ENCODE measurements at regions of chr5 and their contacts with region 1.

Region 1: GRCh38 chr5:121489972-121490371 is 361.7 kb upstream of the FTMT start:
- DNase-seq: no peak
- H3K4me3 ChIP-seq: no peak overlapping the region
- H3K27ac ChIP-seq: no peak overlapping the region
- H3K4me1 ChIP-seq: no peaks in the 10 kb centered on the region
- H3K27me3 ChIP-seq: no peaks in the 10 kb centered on the region
- CTCF ChIP-seq: no peak

Region 2: DNA sequence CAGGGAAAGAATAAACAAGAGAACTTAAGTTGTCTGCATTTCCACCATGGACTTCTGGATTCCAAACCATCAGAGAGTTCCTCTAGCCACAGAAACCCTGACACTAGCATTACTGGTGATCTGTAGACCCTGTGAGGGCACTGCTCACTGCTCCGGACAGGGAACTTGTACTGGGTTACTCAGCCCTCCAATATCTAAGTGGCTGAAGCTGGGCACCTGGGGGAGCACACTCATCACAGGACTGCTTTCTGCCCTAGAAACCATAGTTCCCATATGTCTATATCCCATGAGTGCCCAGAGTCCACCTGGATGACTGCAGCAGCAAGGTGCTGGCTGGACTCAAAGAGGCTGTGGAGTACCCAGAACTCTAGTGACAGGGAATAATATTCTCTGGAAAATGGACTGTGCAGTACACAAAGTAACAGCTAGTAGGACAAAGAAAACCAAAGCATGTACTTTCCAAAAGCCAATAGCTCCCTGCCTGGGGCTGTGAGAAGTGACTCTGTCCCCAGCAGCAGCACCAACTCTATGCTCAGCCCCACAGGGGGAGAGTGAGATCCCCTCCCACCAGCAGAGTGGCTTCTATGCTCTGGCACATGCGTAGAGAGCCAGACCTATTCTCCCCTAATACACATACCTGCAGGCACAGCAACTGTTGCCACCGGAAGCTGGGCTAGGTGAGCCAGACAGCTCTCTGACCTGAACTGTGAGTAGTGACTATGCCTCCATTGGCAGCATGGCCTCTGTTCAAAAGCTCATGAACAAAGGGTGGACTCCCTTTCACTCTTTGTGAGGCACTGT is 111.2 kb before region 1 on chr5:
- CTCF ChIA-PET with region 1: interaction called, 10 read pairs
- POLR2A ChIA-PET with region 1: no interaction called
- intact Hi-C with region 1: no loop called
- DNase-seq: no peak
- H3K4me3 ChIP-seq: no peak overlapping the region
- H3K27ac ChIP-seq: peak overlapping the region; percentile 40
- H3K4me1 ChIP-seq: peaks cover 14% of the 10 kb centered on the region
- H3K27me3 ChIP-seq: no peaks in the 10 kb centered on the region
- CTCF ChIP-seq: no peak